ENCODE measurements at regions of chr1 and their contacts with region 1.

Region 1: DNA sequence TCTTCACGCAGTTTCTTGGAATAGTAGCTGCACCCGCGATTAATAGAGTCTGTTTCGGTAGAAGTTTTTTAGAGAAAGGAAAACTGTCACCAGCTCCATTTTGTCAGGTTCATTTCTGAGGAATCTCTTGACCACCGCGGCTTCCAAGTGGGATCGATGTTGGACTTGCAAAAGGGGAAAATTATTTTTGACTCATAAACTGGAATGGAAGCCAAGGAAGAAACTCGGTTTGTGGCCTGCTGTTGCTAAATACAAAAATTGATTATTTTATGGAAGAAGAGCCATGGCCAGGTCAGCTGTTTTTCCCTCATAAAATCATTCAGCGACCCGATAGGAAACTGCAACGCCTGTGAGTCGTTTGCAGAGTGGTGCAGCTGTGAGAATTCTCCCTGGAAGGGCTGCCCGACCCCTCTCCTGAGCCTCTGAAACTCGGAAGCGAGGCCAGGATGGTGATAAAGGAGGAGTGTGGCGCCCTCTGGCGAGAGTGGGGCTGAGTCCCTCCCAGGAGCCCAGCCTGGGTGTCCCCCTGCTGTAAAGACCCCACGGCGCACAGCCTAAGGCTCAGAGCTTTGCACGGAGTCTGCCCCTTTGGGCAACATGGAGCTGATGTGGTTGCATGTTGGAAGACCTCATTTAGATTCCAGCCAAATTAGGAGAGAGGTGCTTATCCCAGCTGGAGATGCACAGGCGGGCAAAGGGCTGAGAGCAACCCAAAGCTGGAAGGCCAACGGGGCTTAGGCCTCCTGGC is 83.6 kb upstream of the SLC25A33 start:
- DNase-seq: peak; percentile 54 to 94
- H3K4me3 ChIP-seq: no peak overlapping the region
- H3K27ac ChIP-seq: no peak overlapping the region
- H3K4me1 ChIP-seq: no peaks in the 10 kb centered on the region; a peak in 1 of 7 replicates
- H3K27me3 ChIP-seq: peaks cover 0 to 3% (median 0%) of the 10 kb centered on the region in 4 experiments; a peak in 1 of 7 replicates
- CTCF ChIP-seq: peak; percentile 92 to 98 (median 97)
- EP300 ChIP-seq: no peak
- POLR2A ChIP-seq: no peak
- RAD21 ChIP-seq: peak; percentile 97 to 98

Region 2: DNA sequence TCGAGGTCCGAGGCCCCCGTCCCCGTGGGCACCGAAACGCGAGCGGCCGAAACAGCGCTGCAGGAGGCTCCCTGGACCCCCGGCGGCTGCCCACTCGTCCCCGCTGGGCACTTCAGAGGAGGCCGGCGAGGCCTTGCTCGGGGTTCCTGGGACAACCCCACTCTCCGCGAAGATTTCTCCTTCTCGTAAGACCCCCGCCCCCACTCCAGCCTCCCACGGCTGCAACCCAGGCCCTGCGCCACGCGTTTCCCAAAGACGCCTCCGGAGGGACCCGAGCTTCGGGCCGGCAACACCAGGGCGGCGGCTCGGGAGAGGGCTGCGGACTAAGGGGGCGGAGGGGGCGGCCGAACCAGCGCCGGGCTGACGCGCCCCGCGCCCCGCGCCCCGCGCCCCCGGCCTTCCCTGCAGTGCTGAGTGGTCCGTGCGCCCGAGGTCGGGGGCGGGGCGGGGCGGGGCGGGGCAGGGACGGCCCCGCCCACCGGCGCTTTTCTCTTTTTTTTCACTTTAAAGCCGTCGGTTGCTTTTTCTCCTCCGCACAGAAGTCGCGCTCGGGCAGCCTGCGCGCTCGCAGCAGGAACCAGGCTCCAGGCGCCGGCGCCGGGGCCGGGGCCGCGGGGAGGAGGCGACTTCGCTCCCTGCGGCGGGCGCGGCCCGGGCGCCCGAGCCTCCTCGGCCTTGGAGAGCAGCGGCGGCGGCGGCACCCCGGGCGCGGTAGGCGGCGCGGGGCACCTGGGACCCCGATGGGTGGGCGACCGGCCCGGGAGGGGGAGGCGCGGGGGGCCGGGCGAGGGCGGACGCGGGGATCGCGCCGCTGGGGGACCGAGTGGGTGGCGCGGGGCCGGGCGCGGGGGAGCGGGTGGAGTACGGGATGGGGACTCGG is 163.1 kb before region 1 on chr1 and contains the start of gene SPSB1:
- CTCF ChIA-PET with region 1: interaction called, 98 read pairs
- POLR2A ChIA-PET with region 1: no interaction called
- DNase-seq: peak in 1 of 2 experiments; percentile 66
- H3K4me3 ChIP-seq: peak within 1 kb of the TSS; percentile 61 to 80 (median 66)
- H3K27ac ChIP-seq: no peak within 1 kb of the TSS
- H3K4me1 ChIP-seq: peaks cover 0 to 10% (median 5%) of the 10 kb centered on the region in 4 experiments; a peak in 4 of 7 replicates
- H3K27me3 ChIP-seq: peaks cover 0 to 21% (median 16%) of the 10 kb centered on the region in 4 experiments; a peak in 6 of 7 replicates
- CTCF ChIP-seq: no peak
- EP300 ChIP-seq: no peak
- POLR2A ChIP-seq: peak in 1 of 2 experiments; percentile 66; a peak in 1 of 3 replicates
- RAD21 ChIP-seq: no peak
- total RNA-seq, gene SPSB1: 4.0 and 5.3 TPM in 2 replicates

Region 3: GRCh38 chr1:9399510-9400424 is 55.9 kb before region 1 on chr1:
- CTCF ChIA-PET with region 1: interaction called, 17 read pairs
- POLR2A ChIA-PET with region 1: no interaction called
- DNase-seq: no peak
- H3K4me3 ChIP-seq: no peak overlapping the region
- H3K27ac ChIP-seq: no peak overlapping the region
- H3K4me1 ChIP-seq: peaks cover 0 to 7% (median 2%) of the 10 kb centered on the region in 4 experiments; a peak in 5 of 7 replicates
- H3K27me3 ChIP-seq: no peaks in the 10 kb centered on the region
- CTCF ChIP-seq: no peak
- EP300 ChIP-seq: no peak
- POLR2A ChIP-seq: no peak
- RAD21 ChIP-seq: no peak

Region 4: GRCh38 chr1:9441451-9442133 is 14.1 kb before region 1 on chr1:
- CTCF ChIA-PET with region 1: interaction called, 22 read pairs
- POLR2A ChIA-PET with region 1: interaction called, 3 read pairs
- DNase-seq: no peak
- H3K4me3 ChIP-seq: no peak overlapping the region
- H3K27ac ChIP-seq: no peak overlapping the region
- H3K4me1 ChIP-seq: peaks cover 0 to 8% (median 2%) of the 10 kb centered on the region in 4 experiments; a peak in 3 of 7 replicates
- H3K27me3 ChIP-seq: no peaks in the 10 kb centered on the region
- CTCF ChIP-seq: no peak
- EP300 ChIP-seq: no peak
- POLR2A ChIP-seq: no peak
- RAD21 ChIP-seq: no peak

Region 5: DNA sequence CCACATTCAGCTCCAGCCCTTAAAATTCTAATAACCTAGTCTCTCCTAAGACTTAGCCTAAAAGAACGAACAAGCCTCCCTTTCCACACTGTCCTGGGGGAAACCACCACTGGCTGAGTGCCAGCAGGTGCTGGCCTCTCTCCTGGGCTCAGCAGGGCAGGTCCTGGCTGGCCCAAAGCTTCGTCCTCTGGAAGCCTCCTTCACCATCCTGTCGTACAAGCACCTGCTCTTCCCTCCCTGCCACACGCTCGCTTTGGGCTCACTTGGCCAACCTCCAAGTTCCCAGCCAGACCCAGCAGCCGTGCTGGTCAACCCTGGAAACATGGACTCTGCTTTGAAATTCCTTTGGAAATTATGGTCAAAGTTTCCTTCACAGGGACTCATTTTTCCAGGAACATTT is 25.4 kb after region 1 on chr1:
- CTCF ChIA-PET with region 1: interaction called, 10 read pairs
- POLR2A ChIA-PET with region 1: no interaction called
- DNase-seq: no peak
- H3K4me3 ChIP-seq: no peak overlapping the region
- H3K27ac ChIP-seq: no peak overlapping the region
- H3K4me1 ChIP-seq: no peaks in the 10 kb centered on the region
- H3K27me3 ChIP-seq: no peaks in the 10 kb centered on the region
- CTCF ChIP-seq: no peak
- EP300 ChIP-seq: no peak
- POLR2A ChIP-seq: no peak
- RAD21 ChIP-seq: no peak

Region 6: DNA sequence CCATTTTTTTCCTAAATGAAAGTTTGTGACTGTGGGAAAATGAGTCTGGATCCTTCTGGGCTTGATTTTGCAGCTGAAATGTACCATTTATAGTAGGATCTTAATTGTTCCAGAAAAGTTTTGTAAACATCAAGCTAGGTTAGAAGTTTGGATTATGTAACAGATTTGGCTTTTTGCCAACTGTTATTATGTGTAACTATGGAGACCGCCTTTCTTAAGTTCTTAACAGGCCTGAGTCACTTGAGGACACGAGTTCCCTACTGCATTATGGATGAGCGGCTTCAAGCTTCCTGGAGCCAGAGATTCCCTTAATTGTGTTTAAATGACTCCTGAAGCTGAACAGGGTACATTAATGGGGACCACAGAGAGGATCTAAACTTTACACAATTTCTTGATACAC is 105.8 kb after region 1 on chr1:
- CTCF ChIA-PET with region 1: no interaction called
- POLR2A ChIA-PET with region 1: no interaction called
- DNase-seq: no peak
- H3K4me3 ChIP-seq: no peak overlapping the region
- H3K27ac ChIP-seq: no peak overlapping the region
- H3K4me1 ChIP-seq: no peaks in the 10 kb centered on the region; a peak in 1 of 7 replicates
- H3K27me3 ChIP-seq: peaks cover 0 to 9% (median 3%) of the 10 kb centered on the region in 4 experiments; a peak in 3 of 7 replicates
- CTCF ChIP-seq: no peak
- EP300 ChIP-seq: no peak
- POLR2A ChIP-seq: no peak
- RAD21 ChIP-seq: no peak

Region 7: DNA sequence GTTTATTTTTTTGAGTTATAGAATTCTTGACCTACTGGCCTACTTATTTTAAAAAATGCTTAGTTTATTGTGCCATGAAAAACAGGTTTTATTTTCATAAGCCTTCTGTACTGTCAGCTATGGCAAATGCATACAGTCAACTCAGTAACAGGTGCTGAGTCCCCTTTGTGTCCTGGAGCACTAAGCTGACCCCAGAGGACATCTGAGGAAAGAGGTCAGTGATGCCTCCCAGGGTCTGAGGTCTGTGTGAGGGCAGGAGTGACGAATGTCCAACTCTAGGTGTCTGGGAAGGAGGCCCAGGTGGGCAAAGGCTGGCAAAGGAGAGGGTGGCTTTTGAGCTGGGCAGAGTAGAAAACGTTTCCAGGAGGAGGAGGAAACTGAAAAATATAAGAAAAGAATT is 125.3 kb after region 1 on chr1:
- CTCF ChIA-PET with region 1: no interaction called
- POLR2A ChIA-PET with region 1: no interaction called
- DNase-seq: no peak
- H3K4me3 ChIP-seq: no peak overlapping the region
- H3K27ac ChIP-seq: no peak overlapping the region
- H3K4me1 ChIP-seq: no peaks in the 10 kb centered on the region
- H3K27me3 ChIP-seq: no peaks in the 10 kb centered on the region
- CTCF ChIP-seq: no peak
- EP300 ChIP-seq: no peak
- POLR2A ChIP-seq: no peak
- RAD21 ChIP-seq: no peak

Measured in H1 (cell line).